GM13977 (cell line): ENCODE measurements at regions of chr1 and their contacts with region 1.

Region 1: DNA sequence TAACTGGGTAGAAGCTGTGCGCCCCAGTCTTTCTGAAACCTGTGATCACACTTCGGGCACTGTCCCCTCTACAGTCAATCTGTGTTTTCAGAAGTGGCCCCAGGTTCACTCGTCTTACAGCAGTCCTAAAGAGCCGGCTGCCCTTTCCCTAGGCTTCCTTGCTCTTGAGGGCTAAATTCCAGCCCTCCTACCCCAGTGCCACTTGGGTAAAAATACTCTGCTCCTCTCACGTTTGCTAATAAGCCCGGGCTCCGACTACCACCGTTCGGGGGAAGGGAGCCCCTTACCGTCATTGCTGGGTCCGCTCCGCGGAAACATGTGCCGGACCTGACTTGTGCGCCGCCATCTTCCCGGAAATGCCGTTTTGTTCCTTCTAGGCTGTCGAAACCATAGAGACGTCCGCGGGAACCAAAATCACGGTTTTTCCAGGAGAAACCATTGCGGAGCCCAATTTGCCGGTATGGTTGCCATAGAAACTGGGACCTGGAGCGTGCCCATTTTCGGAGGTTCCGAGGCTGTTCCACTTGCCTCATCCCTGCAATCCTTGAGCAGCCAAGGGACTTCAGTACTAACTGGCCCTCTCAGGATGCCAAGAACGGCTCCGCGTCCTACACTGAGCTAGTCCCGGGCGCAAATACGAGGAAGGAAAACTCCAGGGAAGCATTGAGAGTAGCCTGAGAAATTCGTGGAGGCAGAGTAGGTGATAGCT is at the start of gene GPATCH4:
- DNase-seq: peak; percentile 64
- CTCF ChIP-seq: no peak

Region 2: DNA sequence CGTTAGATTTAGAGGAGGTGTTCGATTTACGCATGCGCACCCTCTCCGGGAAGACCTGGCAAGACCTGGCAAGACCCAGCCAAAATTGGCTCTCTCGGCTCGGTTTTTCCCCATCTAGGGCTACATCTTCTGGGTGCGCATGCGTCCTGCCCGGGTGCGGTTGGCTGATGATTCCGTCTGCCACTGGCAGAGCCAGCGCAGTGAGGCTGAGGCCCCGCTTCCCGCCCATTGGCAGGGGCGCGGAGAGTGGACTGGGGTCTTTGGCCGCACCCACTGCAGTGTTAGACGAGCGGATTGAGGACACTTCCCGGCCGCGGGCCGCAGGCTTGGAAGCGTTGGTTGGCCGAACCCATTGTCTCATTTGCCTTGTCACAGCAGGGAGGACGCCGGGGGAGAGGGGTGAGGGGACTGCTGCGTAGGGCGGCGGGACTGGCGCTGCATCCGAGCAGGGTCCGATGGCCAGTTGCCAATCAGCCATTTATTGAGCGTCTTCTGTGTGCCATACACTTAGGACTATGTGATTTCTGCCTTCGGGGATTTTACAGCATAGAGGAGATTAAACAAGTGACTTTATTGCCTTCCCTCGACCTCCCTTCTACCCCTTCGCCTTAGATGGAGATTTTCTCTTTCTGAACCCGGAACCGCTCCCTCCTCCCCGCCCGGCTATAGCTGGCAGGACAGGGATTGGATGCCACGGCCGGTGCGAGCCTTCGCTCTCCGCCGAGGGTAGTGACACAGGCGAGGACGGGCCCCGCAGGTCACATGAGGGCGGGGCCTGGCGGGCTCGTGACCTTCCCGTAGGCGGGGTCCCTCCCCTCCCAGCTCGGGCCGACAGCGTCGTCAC is 144.4 kb before region 1 on chr1:
- in situ Hi-C with region 1: loop called (anchors 10 kb)
- DNase-seq: peak; percentile 96
- CTCF ChIP-seq: no peak